ENCODE measurements at regions of chr20 and their contacts with region 1.

Region 1: DNA sequence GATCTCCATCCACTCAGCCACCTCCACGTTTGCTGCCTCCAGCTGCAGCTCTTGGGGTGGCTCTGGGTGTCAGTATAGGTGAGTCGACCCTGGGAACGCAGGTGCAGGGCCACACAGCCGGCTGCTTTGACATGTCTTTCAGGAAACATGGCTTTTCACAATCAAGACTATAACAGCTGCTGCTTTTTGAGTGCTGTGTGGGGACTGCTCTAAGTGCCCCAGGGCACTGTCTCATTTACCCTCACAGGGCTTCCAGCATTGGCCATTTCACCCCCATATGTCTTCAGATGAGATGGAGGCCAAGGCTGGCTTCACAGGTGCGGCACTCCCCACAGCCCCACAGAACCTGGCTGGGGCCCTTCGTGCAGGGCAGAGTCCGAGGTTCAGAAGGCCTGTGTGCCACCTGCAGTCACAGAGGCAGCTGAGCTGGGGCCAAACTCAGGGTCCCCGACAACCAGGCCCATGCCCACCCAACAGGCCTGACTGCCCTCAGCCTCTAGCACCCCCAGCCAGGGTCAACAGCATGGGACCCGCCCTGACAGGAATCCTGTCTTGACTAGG is 14.9 kb upstream of the CST7 start:
- DNase-seq: no peak
- H3K4me3 Mint-ChIP-seq: no peak overlapping the region
- H3K27ac Mint-ChIP-seq: no peak overlapping the region
- H3K4me1 Mint-ChIP-seq: peaks cover 24% of the 10 kb centered on the region
- H3K27me3 Mint-ChIP-seq: no peaks in the 10 kb centered on the region

Region 2: GRCh38 chr20:24781422-24781980 is 152.7 kb before region 1 on chr20:
- CTCF ChIA-PET with region 1: interaction called, 4 read pairs
- intact Hi-C with region 1: loop called (anchors 5 kb)
- DNase-seq: peak; percentile 60
- H3K4me3 Mint-ChIP-seq: no peak overlapping the region
- H3K27ac Mint-ChIP-seq: no peak overlapping the region
- H3K4me1 Mint-ChIP-seq: no peaks in the 10 kb centered on the region
- H3K27me3 Mint-ChIP-seq: peaks cover 11% of the 10 kb centered on the region

Region 3: DNA sequence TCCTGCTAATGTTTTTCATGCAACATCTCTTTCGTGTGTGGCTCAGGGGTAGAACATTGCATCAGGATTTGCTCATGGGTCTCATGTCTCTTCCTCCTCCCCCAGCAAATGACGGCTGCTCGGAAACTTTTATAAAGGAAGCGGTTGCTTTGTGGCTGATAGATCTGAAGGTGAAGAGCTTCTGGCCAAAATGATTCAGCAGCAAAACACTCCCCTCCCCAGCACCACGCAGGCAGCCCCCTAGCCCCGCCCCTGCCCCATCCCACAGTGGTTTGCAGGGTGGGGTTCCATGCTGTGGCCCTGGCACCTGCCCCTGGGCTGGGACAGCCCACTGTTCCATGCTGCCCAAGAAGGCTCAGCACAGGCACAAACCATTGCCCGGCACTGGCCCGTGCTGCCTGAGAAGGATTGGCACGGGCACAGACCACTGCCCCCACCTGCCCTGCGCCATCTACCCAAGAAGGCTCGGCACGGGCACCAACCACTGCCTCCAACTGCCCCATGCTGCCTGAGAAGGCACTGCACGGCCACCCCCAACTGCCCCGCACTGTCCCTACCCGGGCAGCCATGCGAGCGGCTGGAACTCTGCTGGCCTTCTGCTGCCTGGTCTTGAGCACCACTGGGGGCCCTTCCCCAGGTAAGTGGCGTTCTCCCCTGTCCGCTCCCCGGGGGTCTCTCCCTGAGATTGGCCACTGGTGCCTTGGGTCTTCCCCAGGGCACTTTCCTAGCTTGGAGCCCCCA is 14.9 kb after region 1 on chr20 and contains the start of gene CST7:
- CTCF ChIA-PET with region 1: interaction called, 5 read pairs
- intact Hi-C with region 1: loop called (anchors 1 kb)
- DNase-seq: peak; percentile 94
- H3K4me3 Mint-ChIP-seq: peak within 1 kb of the TSS; percentile 72
- H3K27ac Mint-ChIP-seq: peak within 1 kb of the TSS; percentile 96
- H3K4me1 Mint-ChIP-seq: peaks cover 40% of the 10 kb centered on the region
- H3K27me3 Mint-ChIP-seq: no peaks in the 10 kb centered on the region
- total RNA-seq, gene CST7: 37.8 to 43.1 TPM

Region 4: DNA sequence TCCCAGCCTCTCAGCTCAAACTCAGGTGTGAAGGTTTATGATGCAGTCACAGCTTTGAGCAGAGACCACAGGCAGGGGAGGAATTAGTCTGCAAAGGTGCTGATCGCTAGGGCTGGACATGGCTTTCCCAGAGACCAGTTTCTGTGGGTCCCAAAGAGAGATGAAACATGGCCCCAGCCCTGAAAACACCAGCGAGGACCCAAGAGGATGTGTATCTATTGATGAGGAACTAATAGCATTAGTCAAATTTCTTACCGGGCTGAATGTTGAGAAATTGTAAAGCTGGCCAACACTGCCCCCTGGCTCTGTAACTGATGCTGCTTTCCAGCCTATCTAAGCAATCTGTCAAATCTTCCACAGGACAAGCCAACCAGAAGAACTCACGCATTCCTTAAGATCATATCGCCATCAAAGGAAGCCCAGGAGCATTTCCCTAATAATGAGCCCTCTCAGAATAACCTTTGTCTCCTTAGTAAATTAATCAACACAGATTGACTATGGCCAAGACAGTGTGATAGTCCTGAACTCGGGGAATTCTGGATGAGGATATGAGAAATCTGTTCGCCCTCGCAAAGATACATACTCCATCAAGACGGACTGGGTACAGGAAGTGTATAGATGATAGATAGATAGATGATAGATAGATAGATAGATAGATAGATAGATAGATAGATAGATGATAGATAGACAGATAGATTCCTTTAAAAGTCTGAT is 131.6 kb after region 1 on chr20:
- CTCF ChIA-PET with region 1: interaction called, 3 read pairs
- intact Hi-C with region 1: loop called (anchors 1 kb)
- DNase-seq: peak; percentile 76
- H3K4me3 Mint-ChIP-seq: no peak overlapping the region
- H3K27ac Mint-ChIP-seq: no peak overlapping the region
- H3K4me1 Mint-ChIP-seq: no peaks in the 10 kb centered on the region
- H3K27me3 Mint-ChIP-seq: peaks cover 14% of the 10 kb centered on the region

Measured in activated naive CD4-positive, alpha-beta T cell treated with anti-CD3 and anti-CD28 coated beads for 36 hours (primary cell).